ENCODE measurements at regions of chr5 and their contacts with region 1.

Region 1: GRCh38 chr5:128083033-128083810 is at the start of gene SLC12A2:
- DNase-seq: peak; percentile 95
- ATAC-seq: peak; percentile 73
- H3K4me3 ChIP-seq: peak within 1 kb of the TSS; percentile 75 to 77
- H3K27ac ChIP-seq: peak within 1 kb of the TSS; percentile 97
- H3K4me1 ChIP-seq: peaks cover 14 to 25% of the 10 kb centered on the region in 2 experiments; a peak in 3 of 4 replicates
- H3K27me3 ChIP-seq: no peaks in the 10 kb centered on the region
- CTCF ChIP-seq: no peak
- POLR2A ChIP-seq: peak; percentile 84
- RAD21 ChIP-seq: 0 out of 2 replicates have a peak, but pooled peaks have one; percentile 2
- total RNA-seq, gene SLC12A2: 41.2 TPM

Region 2: DNA sequence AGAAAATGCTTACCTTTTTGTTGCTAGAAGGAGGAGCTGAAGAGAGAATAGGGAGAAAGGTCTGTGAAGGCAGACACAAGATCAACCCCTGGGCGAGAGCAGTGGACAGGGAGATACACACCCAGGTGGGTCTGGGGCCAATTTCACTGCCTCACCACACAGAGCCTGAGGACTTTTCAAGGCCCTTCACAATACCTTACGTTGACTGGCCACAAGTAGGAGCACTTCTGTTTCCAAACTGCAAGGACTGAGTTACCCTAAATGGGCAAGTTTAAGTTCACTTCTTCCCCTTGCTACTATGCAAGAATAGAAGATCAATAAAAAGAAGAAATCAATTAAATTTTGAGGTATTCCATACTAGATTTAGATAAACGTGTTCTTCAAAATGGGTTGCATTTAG is 174.1 kb before region 1 on chr5:
- CTCF ChIA-PET with region 1: no interaction called
- POLR2A ChIA-PET with region 1: no interaction called
- RAD21 ChIA-PET with region 1: no interaction called
- intact Hi-C with region 1: loop called (anchors 2 kb)
- DNase-seq: peak; percentile 59
- ATAC-seq: peak; percentile 98
- H3K4me3 ChIP-seq: no peak overlapping the region
- H3K27ac ChIP-seq: no peak overlapping the region
- H3K4me1 ChIP-seq: peaks cover 0 to 5% of the 10 kb centered on the region in 2 experiments; a peak in 1 of 4 replicates
- H3K27me3 ChIP-seq: no peaks in the 10 kb centered on the region
- CTCF ChIP-seq: peak; percentile 22 to 67 (median 67); a peak in 4 of 6 replicates
- POLR2A ChIP-seq: no peak
- RAD21 ChIP-seq: peak; percentile 58

Region 3: DNA sequence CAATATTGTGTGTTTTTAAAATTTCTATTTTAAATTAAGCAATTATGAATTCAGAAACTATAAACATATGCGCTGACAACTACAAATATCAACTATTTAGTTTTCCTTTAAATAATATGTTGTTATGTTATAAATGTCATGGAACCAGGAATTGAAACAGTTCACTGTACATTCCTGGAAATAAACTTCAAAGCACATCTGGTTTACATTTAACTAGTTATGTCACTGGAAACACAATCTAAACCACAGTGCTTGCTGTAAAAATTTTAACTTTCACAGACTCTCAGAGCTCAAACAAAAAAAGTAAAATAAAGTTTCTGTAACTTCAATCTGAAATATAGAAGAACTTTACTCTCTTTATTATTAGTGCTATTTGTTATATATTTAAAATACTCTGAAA is 275.6 kb after region 1 on chr5:
- CTCF ChIA-PET with region 1: no interaction called
- POLR2A ChIA-PET with region 1: no interaction called
- RAD21 ChIA-PET with region 1: no interaction called
- intact Hi-C with region 1: no loop called
- DNase-seq: no peak
- ATAC-seq: no peak
- H3K4me3 ChIP-seq: no peak overlapping the region
- H3K27ac ChIP-seq: no peak overlapping the region
- H3K4me1 ChIP-seq: no peaks in the 10 kb centered on the region
- H3K27me3 ChIP-seq: no peaks in the 10 kb centered on the region
- CTCF ChIP-seq: no peak
- POLR2A ChIP-seq: no peak
- RAD21 ChIP-seq: no peak

Measured in HCT116 (cell line).